Right ventricle myocardium inferior (tissue), 1 donor: ENCODE measurements at regions of chr2 and their contacts with region 1.

Region 1: DNA sequence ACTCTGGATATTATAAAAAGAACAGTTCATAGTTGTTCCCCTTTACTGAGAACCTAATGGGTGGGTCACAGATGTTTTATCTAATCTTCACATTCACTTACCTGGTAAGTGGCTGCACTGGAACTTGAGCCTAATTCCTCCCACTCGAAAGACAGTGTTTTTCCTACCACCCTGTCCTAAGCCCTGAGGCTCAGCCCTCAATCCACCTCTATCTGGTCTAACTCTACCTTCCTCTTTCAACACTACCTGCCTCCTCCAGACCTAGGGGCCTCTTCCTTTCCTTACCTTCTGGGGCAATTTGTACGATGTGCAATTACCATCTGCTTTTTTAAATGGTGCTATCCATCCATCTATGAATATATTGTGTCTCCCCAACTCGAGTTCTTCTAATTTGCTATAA is 9.7 kb upstream of the KIF3C start:
- DNase-seq: no peak
- ATAC-seq: no peak

Region 2: DNA sequence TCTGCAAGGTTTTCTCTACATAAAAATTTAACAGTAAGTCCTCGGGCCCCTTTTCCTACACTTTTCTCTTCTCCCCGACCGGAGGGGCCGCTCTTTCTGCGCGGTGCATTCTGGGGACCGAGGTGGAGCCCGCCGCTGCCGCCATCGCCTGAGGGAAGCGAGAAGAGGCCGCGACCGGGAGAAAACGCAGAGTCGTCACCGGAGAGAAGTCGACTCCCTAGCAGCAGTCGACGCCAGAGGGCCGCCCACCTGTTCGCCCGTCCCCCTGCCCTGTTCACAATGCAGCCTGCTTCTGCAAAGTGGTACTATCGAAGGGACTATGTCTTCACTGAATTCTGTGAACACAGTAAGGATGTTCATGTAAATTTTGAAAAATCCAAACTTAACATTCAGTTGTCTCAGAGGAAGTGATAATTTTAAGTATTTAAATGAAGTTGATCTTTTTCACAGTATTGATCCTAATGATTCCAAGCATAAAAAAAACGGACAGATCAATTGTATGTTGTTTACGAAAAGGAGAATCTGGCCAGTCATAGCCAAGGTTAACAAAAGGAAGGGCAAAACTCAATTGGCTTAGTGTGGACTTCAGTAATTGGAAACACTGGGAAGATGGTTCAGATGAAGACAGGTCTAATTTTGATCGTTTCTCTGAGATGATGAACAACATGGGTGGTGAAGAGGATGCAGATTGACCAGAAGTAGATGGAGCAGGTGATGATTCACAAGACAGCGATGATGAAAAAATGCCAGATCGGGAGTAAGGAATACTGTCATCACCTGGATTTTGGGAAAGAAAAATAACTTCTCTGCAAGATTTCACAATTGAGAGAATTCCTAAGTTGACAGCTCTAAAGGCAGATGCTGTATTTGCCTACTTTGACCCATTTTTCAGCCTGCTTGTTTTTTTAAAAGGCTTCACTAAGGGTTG is 169.5 kb before region 1 on chr2:
- intact Hi-C with region 1: no loop called
- DNase-seq: peak; percentile 70
- ATAC-seq: peak; percentile 62

Region 3: GRCh38 chr2:25894135-25894830 is 97.7 kb before region 1 on chr2:
- intact Hi-C with region 1: no loop called
- DNase-seq: no peak
- ATAC-seq: no peak

Region 4: GRCh38 chr2:25951071-25951547 is 40.9 kb before region 1 on chr2:
- intact Hi-C with region 1: loop called (anchors 5 kb)
- DNase-seq: peak; percentile 89
- ATAC-seq: peak; percentile 95

Region 5: GRCh38 chr2:26033818-26034636 is 42.1 kb after region 1 on chr2 and contains the start of gene RAB10:
- intact Hi-C with region 1: loop called (anchors 5 kb)
- DNase-seq: peak; percentile 100
- ATAC-seq: peak; percentile 97
- total RNA-seq, gene RAB10: 96.7 TPM

Region 6: DNA sequence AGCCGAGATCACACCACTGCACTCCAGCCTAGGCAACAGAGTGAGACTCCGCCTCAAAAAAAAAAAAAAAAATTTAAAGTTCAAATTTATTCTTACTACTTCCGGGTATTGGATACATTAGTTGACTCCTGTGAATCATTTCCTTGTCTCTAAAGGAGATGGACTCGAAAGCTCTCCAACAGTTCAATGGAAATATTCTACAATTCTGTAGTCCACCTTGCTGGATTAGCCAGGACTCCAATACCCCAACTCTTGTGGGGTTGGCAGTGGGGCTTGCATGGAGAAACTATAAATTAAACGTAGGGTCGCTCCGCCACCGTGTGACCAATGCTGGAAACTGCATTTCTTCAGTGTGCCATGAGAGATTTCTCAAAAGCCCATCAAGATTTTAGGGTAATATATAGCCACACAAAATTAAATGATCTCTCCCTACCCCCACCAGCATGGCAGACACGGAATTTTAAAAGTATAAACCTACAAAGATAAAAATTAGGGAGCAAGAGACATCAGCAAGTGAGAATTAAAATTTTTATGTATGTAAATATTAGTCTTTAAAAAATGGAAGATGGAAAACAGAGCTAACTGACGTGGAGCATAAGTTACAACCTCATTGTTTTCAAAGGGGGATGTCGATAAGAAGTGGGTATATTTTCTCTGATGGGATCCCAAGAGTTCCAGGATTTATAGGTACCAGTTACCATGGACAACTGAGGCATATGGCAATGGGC is 153.2 kb after region 1 on chr2:
- intact Hi-C with region 1: loop called (anchors 2 kb)
- DNase-seq: peak; percentile 71
- ATAC-seq: no peak